Vagina (tissue), 2 donors: ENCODE measurements at regions of chr20 and their contacts with region 1.

Region 1: DNA sequence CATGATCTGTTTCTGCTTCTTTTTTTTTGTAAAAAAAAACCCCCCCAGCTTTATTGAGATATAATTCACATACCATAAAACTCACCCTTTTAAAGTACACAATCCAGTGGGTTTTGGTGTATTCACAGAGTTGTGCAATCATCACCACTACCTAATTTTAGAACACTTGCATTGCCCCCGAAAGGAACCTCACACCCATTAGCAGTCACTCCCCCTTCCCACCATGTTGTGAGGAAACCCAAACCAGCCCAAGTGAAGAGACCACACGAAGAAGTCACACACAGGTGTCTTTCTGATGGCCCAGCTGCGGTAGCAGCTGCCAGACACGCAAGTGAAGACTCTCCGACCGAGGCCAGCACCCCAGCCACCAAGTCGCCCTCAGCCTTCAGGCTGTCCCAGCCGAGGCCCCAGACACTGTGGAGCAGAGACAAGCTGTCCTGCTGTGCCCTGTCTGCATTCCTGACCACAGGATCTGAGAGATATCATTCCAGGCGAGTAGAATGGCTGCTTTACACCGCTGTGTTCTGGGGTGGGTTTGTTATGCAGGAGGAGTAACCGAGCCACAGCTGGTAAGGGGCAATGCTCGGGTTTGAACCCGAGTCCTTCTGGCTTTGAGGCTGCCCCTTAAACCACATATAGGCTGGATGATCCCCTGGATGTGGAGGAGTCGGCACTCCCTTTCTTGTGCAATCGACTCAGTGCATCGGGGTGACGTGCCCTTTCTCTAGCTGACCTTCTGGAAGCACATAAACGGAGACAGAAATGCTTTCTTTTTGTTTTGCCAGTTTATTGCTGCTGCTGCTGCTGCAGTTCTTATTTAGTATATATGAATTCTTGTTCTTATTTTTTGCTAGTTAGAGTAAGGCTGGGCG is 59.1 kb upstream of the PTPN1 start:
- DNase-seq: no peak
- H3K4me3 ChIP-seq: peak overlapping the region; percentile 2 to 17
- H3K27ac ChIP-seq: peak overlapping the region; percentile 90
- H3K4me1 ChIP-seq: peaks cover 28% of the 10 kb centered on the region
- H3K27me3 ChIP-seq: no peaks in the 10 kb centered on the region
- CTCF ChIP-seq: no peak
- POLR2A ChIP-seq: no peak

Region 2: DNA sequence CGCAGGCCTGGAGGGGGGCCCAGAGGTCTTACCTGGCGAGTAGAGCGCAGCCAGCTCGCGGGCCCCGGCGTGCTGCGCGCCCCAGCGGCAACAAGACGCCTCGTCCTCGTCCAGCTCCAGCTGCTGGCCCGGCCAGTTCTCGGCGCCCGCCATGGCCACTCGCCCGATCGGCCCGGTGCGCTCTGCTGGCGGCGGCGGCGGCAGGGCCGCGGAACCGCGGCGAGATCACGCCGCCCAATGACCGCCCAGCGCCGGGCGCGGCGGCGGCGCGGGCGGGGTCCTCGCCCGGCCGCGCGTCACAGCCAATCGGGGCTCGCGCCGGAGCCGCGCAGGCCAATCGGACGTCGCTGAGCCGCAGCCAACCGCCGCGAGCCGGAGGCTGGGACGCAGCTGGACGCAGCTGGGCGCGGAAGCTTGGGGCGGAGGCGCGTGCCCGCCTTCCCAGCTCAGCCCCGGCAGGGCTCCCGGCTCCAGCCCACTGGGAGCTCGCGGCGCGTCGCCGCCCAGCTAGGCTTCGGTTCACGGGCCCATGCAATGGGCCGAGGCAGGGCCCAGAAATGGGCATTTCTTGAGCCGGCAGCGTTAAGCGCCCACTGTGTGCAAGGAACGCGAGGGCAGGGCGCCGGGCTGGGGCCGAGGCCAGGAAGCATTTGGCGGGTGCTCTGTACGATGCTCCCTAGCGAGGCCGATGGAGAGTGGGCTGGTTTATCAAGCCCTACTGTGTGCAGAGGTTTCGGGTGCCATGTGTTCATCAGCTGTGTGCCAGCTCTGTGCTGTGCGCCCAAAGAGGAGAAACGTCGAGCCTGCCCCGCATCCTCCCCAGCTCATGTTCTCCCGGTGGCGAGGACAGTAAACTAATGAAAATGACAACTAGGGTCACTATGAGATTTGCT is 297.4 kb before region 1 on chr20 and contains the start of gene PEDS1:
- intact Hi-C with region 1: no loop called
- DNase-seq: no peak
- H3K4me3 ChIP-seq: peak within 1 kb of the TSS; percentile 94 to 98
- H3K27ac ChIP-seq: peak within 1 kb of the TSS; percentile 95
- H3K4me1 ChIP-seq: peaks cover 52% of the 10 kb centered on the region
- H3K27me3 ChIP-seq: no peaks in the 10 kb centered on the region
- CTCF ChIP-seq: no peak
- POLR2A ChIP-seq: peak in 1 of 2 donors; percentile 63
- total RNA-seq, gene PEDS1: 25.5 TPM

Region 3: DNA sequence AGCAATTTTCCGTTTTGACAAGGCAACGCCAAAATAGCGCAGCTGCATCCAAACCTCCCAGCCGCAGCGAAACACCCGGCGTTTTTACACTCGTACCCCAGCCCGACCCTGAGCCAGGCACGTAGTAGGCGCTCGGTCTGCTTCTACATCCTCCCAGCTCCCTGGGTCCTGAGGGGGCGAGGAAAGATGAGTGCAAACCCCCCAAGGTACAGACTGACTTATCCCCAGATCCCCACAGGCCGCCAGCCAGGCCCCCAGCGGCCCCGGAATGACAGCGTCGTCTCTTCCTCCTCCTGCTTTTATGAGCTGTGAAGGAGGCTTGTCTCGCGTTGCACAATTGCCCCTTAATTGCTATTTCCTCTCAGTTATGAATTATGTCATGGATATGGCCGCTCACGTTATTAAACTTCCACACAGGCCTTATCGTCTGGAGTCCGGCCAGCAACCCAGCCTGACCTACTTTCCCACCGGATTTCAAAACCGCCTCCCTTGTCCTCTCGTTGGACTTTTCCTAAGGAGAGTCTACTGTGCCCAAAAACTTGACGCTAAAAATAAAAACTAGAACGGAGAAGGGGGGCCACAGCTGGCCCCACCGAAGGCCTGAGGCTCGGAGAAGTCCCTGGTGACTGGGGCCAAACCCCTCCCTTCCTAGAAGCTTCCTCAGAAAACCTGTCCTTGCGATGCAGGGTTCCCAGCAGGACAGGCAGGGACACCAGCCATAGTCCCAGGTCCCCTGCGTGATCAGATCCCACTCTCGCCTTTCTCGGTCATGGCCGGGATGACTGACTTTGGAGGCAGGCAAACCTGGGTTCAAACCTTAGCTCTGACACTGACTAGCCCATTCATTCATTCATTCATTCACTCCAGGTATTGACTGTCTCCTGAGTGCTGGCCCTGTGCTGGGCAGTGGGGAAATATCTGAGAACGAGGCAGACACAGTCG is 71.8 kb before region 1 on chr20:
- intact Hi-C with region 1: loop called (anchors 5 kb)
- DNase-seq: peak in 1 of 2 donors; percentile 99
- H3K4me3 ChIP-seq: peak overlapping the region; percentile 0 to 5
- H3K27ac ChIP-seq: peak overlapping the region; percentile 74
- H3K4me1 ChIP-seq: peaks cover 38% of the 10 kb centered on the region
- H3K27me3 ChIP-seq: no peaks in the 10 kb centered on the region
- CTCF ChIP-seq: no peak
- POLR2A ChIP-seq: peak in 1 of 2 donors; percentile 56

Region 4: GRCh38 chr20:50415516-50416113 is 35.5 kb before region 1 on chr20:
- intact Hi-C with region 1: loop called (anchors 5 kb)
- DNase-seq: peak in 1 of 2 donors; percentile 99
- H3K4me3 ChIP-seq: peak overlapping the region in 1 of 2 donors; percentile 27
- H3K27ac ChIP-seq: peak overlapping the region; percentile 98
- H3K4me1 ChIP-seq: peaks cover 35% of the 10 kb centered on the region
- H3K27me3 ChIP-seq: no peaks in the 10 kb centered on the region
- CTCF ChIP-seq: peak in 1 of 3 experiments; percentile 19
- POLR2A ChIP-seq: peak in 1 of 2 donors; percentile 48

Region 5: DNA sequence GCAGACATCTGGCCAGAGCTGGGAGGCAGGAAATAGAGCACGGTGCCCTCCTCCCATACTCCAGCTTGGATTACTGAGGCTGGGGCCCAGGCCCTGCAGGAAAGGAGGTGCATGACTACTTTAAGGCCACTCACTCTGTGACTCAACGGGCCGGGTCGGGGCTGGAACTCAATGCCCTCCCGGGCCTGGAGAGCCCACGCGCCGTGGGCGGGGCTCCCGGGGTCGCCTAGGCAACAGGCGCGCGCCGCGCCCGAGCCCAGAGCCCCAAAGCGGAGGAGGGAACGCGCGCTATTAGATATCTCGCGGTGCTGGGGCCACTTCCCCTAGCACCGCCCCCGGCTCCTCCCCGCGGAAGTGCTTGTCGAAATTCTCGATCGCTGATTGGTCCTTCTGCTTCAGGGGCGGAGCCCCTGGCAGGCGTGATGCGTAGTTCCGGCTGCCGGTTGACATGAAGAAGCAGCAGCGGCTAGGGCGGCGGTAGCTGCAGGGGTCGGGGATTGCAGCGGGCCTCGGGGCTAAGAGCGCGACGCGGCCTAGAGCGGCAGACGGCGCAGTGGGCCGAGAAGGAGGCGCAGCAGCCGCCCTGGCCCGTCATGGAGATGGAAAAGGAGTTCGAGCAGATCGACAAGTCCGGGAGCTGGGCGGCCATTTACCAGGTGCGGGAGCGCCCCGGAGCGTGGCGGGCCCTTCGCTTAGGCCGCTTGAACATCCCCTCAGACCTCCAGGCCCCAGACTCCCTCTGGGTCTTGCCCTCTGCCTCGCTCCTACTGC is 59.0 kb after region 1 on chr20 and contains the start of gene PTPN1:
- intact Hi-C with region 1: no loop called
- DNase-seq: peak; percentile 99
- H3K4me3 ChIP-seq: peak within 1 kb of the TSS; percentile 75 to 78
- H3K27ac ChIP-seq: peak within 1 kb of the TSS; percentile 89
- H3K4me1 ChIP-seq: peaks cover 50% of the 10 kb centered on the region
- H3K27me3 ChIP-seq: no peaks in the 10 kb centered on the region
- CTCF ChIP-seq: no peak
- POLR2A ChIP-seq: peak; percentile 11 to 99
- total RNA-seq, gene PTPN1: 25.3 TPM